ENCODE measurements at regions of chr9 and their contacts with region 1.

Region 1: DNA sequence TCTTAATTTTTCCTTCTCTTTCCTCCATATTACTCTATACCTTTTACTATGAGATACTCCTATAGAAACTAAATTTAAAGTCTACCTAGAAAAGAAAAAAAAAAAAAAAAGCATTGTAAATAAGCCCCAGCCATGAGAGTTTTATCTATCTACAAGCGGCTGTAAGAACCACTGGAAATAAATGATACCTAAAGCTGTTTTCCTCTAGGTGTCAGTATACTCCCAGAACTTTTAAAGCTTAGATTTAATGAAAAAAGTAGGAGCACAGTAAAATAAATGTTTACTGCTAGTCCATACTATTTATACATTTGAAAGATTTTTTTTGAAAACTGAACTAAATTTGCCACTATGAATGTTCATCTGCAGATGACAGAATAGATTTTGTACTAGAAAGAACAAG is 26.2 kb downstream of the TYRP1 start:
- DNase-seq: no peak
- ATAC-seq: peak; percentile 70 to 83 (median 74)
- H3K4me3 ChIP-seq: no peak overlapping the region
- H3K27ac ChIP-seq: no peak overlapping the region
- H3K4me1 ChIP-seq: no peaks in the 10 kb centered on the region
- H3K27me3 ChIP-seq: no peaks in the 10 kb centered on the region
- CTCF ChIP-seq: peak; percentile 47 to 64 (median 54)
- POLR2A ChIP-seq: no peak

Region 2: DNA sequence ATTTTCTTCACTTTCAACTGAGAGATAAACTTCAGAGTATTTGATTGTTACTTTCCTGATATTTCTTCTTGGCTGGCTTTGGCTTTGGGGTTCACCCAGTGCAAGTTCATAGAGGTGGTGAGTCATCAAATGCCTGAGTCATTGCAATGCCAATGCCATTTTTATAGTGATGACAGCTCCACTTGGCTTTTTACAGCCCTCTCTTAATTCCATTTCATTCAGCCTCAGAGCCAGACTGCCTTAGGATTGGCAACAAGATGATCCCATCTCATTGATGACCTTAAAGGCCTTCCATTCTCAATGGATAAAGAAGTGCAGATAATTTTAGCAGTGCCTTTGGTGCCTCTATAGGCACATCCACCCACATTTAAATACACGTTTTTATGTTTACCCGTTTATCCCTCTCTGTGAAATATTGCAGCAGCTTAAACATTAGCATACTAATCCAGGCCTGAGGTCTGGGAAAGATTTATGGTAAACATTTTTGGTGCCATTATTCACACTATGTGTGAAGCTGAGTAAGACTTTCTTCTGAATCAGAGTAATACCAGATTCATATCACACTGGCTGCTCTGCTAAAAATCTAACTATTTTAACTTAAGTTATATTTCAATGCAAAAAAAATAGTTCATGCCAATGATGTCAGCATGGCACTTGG is 115.1 kb before region 1 on chr9:
- intact Hi-C with region 1: no loop called
- DNase-seq: no peak
- ATAC-seq: no peak
- H3K4me3 ChIP-seq: no peak overlapping the region
- H3K27ac ChIP-seq: no peak overlapping the region
- H3K4me1 ChIP-seq: no peaks in the 10 kb centered on the region
- H3K27me3 ChIP-seq: no peaks in the 10 kb centered on the region
- CTCF ChIP-seq: no peak
- POLR2A ChIP-seq: no peak

Region 3: GRCh38 chr9:12878356-12878978 is 159.0 kb after region 1 on chr9:
- intact Hi-C with region 1: no loop called
- DNase-seq: no peak
- ATAC-seq: peak; percentile 55 to 82 (median 65)
- H3K4me3 ChIP-seq: no peak overlapping the region
- H3K27ac ChIP-seq: no peak overlapping the region
- H3K4me1 ChIP-seq: no peaks in the 10 kb centered on the region
- H3K27me3 ChIP-seq: no peaks in the 10 kb centered on the region
- CTCF ChIP-seq: no peak
- POLR2A ChIP-seq: no peak

Region 4: GRCh38 chr9:12993466-12993865 is 274.0 kb after region 1 on chr9:
- intact Hi-C with region 1: loop called in 1 of 2 experiments (anchors 10 kb)
- DNase-seq: no peak
- ATAC-seq: no peak
- H3K4me3 ChIP-seq: no peak overlapping the region
- H3K27ac ChIP-seq: no peak overlapping the region
- H3K4me1 ChIP-seq: no peaks in the 10 kb centered on the region
- H3K27me3 ChIP-seq: no peaks in the 10 kb centered on the region
- CTCF ChIP-seq: no peak
- POLR2A ChIP-seq: no peak